ENCODE measurements at regions of chr5 and their contacts with region 1.

Region 1: GRCh38 chr5:172235132-172235780 is 41.3 kb downstream of the EFCAB9 start:
- DNase-seq: peak in 1 of 2 experiments; percentile 48
- H3K4me3 ChIP-seq: no peak overlapping the region
- H3K4me3 Mint-ChIP-seq: peak overlapping the region; percentile 55
- H3K27ac Mint-ChIP-seq: peak overlapping the region; percentile 70
- H3K4me1 ChIP-seq: peaks cover 52% of the 10 kb centered on the region
- H3K4me1 Mint-ChIP-seq: peaks cover 47% of the 10 kb centered on the region
- H3K27me3 ChIP-seq: no peaks in the 10 kb centered on the region
- H3K27me3 Mint-ChIP-seq: no peaks in the 10 kb centered on the region
- CTCF ChIP-seq: no peak

Region 2: DNA sequence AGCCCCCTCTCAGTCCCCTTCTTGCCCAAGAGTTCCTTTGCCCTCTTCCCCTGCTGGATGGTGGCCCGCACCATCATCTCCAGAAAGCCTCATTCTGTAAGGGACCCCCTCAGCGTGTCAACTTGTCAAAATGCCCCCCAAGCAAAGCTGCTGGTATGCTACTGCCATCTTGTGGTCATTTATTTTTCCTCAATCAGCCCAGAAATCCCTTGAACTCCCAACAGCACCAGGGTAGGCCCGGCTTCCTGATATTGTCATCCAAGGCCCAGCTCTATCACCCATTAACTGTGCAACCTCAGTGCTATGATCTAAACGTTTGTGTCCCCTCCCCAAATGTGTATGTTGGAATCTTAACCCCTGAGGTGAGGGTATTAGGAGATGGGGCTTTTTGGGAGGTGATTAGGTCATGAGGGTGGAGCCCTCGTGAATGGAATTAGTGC is 175.6 kb before region 1 on chr5:
- CTCF ChIA-PET with region 1: interaction called, 12 read pairs
- POLR2A ChIA-PET with region 1: no interaction called
- intact Hi-C with region 1: no loop called
- DNase-seq: peak in 1 of 2 experiments; percentile 21
- H3K4me3 ChIP-seq: no peak overlapping the region
- H3K4me3 Mint-ChIP-seq: no peak overlapping the region
- H3K27ac Mint-ChIP-seq: no peak overlapping the region
- H3K4me1 ChIP-seq: no peaks in the 10 kb centered on the region
- H3K4me1 Mint-ChIP-seq: no peaks in the 10 kb centered on the region
- H3K27me3 ChIP-seq: no peaks in the 10 kb centered on the region
- H3K27me3 Mint-ChIP-seq: no peaks in the 10 kb centered on the region
- CTCF ChIP-seq: peak; percentile 57 to 73

Region 3: GRCh38 chr5:172211676-172212075 is 23.6 kb before region 1 on chr5:
- CTCF ChIA-PET with region 1: no interaction called
- POLR2A ChIA-PET with region 1: no interaction called
- intact Hi-C with region 1: loop called (anchors 1 kb)
- DNase-seq: no peak
- H3K4me3 ChIP-seq: no peak overlapping the region
- H3K4me3 Mint-ChIP-seq: no peak overlapping the region
- H3K27ac Mint-ChIP-seq: no peak overlapping the region
- H3K4me1 ChIP-seq: no peaks in the 10 kb centered on the region
- H3K4me1 Mint-ChIP-seq: peaks cover 8% of the 10 kb centered on the region
- H3K27me3 ChIP-seq: no peaks in the 10 kb centered on the region
- H3K27me3 Mint-ChIP-seq: no peaks in the 10 kb centered on the region
- CTCF ChIP-seq: no peak

Region 4: DNA sequence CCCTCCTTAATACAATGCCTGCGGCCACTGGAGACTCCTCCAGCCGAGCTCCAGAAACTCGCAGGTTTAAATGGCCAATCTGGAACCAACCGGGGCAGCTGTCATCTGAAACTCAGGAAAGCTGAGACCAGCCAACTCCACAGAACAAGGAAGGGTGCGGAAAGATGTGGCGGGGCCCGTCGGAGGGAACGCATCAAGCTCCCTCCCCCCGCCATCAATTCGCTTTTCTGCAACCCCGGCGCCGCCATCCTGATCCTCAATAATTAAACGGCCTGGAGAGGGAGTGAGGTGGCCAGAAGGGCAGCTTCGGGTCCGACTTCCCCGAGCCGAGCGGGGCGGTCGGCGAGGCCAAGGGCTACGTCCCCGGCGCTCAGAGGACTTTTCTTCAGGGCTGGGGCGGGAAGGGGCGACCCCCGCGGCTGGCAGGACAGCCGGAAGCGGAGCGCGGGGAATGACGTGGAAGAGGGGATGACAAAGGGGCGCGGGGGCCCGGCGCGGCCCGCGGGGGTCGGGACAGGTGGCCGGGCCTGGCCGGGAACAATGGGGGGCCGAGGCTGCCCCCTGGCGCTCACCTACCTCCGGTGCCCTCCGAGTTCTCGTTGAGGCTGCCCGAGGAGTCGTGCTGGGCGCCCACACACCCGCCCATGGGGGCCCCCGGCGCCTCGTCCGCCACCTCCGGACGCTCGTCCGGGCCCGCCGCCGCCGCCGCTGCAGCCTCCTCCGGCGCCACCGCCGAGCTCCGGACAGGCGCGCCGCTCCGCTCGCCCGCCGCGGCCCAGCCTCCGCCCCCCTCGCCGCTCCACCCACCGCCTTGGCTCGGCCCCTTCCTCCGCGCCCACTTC is 48.0 kb after region 1 on chr5 and contains the start of gene UBTD2:
- CTCF ChIA-PET with region 1: interaction called, 4 read pairs
- POLR2A ChIA-PET with region 1: interaction called, 3 read pairs
- intact Hi-C with region 1: loop called (anchors 2 kb)
- DNase-seq: peak; percentile 84 to 90
- H3K4me3 ChIP-seq: peak within 1 kb of the TSS; percentile 84
- H3K4me3 Mint-ChIP-seq: peak within 1 kb of the TSS; percentile 86
- H3K27ac Mint-ChIP-seq: peak within 1 kb of the TSS; percentile 85
- H3K4me1 ChIP-seq: peaks cover 5% of the 10 kb centered on the region; the same call in 1 of the 2 replicates
- H3K4me1 Mint-ChIP-seq: peaks cover 9% of the 10 kb centered on the region
- H3K27me3 ChIP-seq: no peaks in the 10 kb centered on the region
- H3K27me3 Mint-ChIP-seq: no peaks in the 10 kb centered on the region
- CTCF ChIP-seq: peak; percentile 42 to 78
- total RNA-seq, gene UBTD2: 32.4 and 33.2 TPM in 2 replicates